Activated naive CD8-positive, alpha-beta T cell treated with anti-CD3 and anti-CD28 coated beads, Interleukin-2, amount 10 ng/mL, durations not matched to agents 7 days and 5 days (primary cell): ENCODE measurements at regions of chr17 and their contacts with region 1.

Region 1: GRCh38 chr17:80263253-80264204 is 2.9 kb downstream of the RNF213 start:
- DNase-seq: peak; percentile 83
- ATAC-seq: peak; percentile 53
- H3K4me3 Mint-ChIP-seq: peak overlapping the region; percentile 90
- H3K27ac Mint-ChIP-seq: peak overlapping the region; percentile 92
- H3K4me1 Mint-ChIP-seq: peaks cover 33% of the 10 kb centered on the region
- H3K27me3 Mint-ChIP-seq: no peaks in the 10 kb centered on the region

Region 2: GRCh38 chr17:80147035-80147836 is 116.3 kb before region 1 on chr17 and contains the start of gene EIF4A3:
- POLR2A ChIA-PET with region 1: interaction called, 19 read pairs
- DNase-seq: peak; percentile 97
- ATAC-seq: peak; percentile 84
- H3K4me3 Mint-ChIP-seq: peak within 1 kb of the TSS; percentile 97
- H3K27ac Mint-ChIP-seq: peak within 1 kb of the TSS; percentile 97
- H3K4me1 Mint-ChIP-seq: peaks cover 30% of the 10 kb centered on the region
- H3K27me3 Mint-ChIP-seq: no peaks in the 10 kb centered on the region
- total RNA-seq, gene EIF4A3: 106 to 115 TPM

Region 3: DNA sequence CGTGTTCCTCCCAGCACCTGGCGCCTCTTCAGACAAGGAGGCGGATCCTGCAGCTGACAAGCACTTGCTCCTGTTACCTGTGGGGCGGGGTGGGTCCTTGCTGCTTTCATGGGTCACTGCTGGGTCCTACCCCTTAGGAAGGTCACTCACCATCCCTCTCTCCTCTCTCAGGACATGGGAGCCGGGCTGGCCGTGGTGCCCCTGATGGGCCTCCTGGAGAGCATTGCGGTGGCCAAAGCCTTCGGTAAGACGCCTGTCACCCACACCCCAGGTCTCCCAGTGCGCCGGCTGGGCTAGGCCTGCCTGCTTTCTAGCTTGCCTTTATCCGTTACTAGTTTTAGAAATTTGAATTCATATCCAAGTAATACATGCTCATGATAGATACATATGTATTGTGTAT is 26.2 kb before region 1 on chr17:
- POLR2A ChIA-PET with region 1: no interaction called
- DNase-seq: no peak
- ATAC-seq: no peak
- H3K4me3 Mint-ChIP-seq: no peak overlapping the region
- H3K27ac Mint-ChIP-seq: no peak overlapping the region
- H3K4me1 Mint-ChIP-seq: no peaks in the 10 kb centered on the region
- H3K27me3 Mint-ChIP-seq: no peaks in the 10 kb centered on the region

Region 4: DNA sequence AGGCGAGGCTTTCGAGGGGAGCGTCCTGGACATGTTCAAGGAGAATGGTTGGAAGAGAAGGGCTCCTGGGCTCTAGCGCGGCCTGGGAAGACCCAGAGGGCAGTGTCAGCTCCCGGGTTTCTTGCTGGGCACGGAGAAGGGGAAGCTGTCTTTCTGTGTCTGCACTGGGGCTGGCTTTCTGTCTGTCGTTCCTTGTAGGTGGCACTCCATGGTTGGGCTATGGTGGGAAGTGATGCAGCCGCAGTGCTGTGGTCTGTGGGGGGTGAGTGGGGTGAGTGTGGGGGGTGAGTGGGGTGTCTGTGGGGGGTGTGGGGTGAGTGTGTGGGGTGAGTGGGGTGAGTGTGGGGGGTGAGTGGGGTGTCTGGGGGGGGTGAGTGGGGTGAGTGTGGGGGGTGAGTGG is 10.8 kb after region 1 on chr17:
- POLR2A ChIA-PET with region 1: interaction called, 26 read pairs
- DNase-seq: no peak
- ATAC-seq: no peak
- H3K4me3 Mint-ChIP-seq: peak overlapping the region; percentile 25
- H3K27ac Mint-ChIP-seq: peak overlapping the region; percentile 55
- H3K4me1 Mint-ChIP-seq: peaks cover 27% of the 10 kb centered on the region
- H3K27me3 Mint-ChIP-seq: no peaks in the 10 kb centered on the region

Region 5: DNA sequence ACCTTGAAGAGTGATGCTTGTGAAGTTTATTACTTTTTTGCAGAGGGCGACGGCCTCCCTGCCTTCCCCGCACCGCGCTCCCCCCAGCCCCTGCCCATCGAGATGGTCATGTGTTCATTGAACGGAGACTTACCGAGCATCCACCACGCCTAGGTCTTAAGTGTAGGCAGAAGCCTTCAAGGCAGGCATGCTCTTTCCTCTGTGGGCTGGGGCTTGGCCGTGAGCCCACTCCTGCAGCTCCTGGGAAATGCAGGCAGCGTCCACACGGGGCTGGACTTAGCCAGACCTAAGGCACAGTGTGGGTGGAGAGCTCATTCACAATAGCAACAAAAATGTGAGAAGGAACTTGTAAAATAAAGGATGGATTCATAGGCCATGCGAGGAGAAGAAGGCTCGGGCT is 16.4 kb after region 1 on chr17:
- POLR2A ChIA-PET with region 1: interaction called, 26 read pairs
- DNase-seq: no peak
- ATAC-seq: no peak
- H3K4me3 Mint-ChIP-seq: no peak overlapping the region
- H3K27ac Mint-ChIP-seq: no peak overlapping the region
- H3K4me1 Mint-ChIP-seq: peaks cover 12% of the 10 kb centered on the region
- H3K27me3 Mint-ChIP-seq: no peaks in the 10 kb centered on the region

Region 6: GRCh38 chr17:80290156-80290555 is 26.6 kb after region 1 on chr17:
- POLR2A ChIA-PET with region 1: interaction called, 10 read pairs
- DNase-seq: no peak
- ATAC-seq: no peak
- H3K4me3 Mint-ChIP-seq: no peak overlapping the region
- H3K27ac Mint-ChIP-seq: peak overlapping the region; percentile 45
- H3K4me1 Mint-ChIP-seq: peaks cover 14% of the 10 kb centered on the region
- H3K27me3 Mint-ChIP-seq: no peaks in the 10 kb centered on the region

Region 7: DNA sequence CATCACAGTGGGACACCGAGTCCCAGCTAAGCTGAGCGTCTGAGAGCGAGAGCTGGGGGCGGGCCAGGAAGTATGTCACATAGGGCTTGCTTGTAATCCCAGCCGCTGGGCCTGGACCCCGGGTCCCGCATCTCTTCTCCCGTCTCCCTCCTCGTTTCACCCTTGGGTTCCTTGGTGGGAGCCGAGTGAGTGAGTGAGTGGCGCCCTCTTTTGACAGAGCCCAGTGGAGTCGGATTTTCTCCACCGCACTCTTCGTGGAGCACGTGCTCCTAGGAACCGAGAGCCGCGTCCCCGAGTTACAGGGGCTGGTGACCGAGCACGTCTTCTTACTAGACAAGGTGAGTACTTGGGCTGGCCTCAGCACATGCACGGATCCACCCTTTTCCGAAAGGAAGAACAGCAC is 100.7 kb after region 1 on chr17:
- POLR2A ChIA-PET with region 1: no interaction called
- DNase-seq: peak; percentile 25
- ATAC-seq: no peak
- H3K4me3 Mint-ChIP-seq: no peak overlapping the region
- H3K27ac Mint-ChIP-seq: no peak overlapping the region
- H3K4me1 Mint-ChIP-seq: no peaks in the 10 kb centered on the region
- H3K27me3 Mint-ChIP-seq: no peaks in the 10 kb centered on the region